SK-N-SH (cell line): ENCODE measurements at regions of chr7 and their contacts with region 1.

Region 1: DNA sequence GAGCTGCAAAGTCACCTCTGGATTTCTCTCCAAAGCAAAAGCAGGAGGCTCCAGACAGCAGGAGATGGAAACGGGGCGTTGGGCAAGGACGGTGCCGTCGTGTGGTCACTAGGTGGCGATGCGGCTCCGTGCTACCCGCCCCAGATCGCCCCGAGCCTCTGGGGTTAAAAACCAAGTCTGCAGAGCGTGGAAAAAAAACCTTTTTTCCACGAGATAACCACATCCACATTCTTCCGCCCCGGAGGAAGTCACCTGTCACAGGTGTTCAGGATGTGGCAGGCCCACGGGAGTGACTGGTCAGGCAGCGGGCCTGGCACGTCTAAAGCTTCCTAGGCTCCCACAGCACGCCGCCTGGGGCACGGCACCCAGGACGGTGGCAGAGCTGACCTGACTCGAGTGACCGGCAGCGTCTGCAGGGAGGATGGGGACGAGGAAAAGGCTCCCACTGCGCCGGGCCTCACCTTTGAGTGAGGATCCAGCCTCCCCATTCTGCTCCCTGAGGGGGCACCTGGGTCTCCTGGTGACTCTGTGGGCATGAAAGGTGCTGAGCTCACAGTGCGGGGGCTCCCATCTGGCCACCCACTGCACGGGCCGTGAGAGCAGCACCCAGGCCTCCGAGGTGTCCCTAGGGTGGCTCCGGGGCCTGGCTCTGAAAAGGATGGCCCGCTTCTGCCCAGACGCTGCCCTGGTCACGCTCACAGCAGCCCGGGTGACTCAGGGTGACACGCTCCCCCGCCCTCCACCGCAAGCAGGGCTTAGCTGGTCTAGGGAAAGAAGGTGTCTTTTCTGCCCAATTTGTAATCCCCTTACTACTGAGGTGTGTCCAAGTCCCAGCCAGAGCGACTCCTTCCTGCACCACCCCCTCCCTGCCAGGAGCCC is 71.3 kb upstream of the TNRC18 start:
- DNase-seq: peak; percentile 95
- H3K4me3 ChIP-seq: peak overlapping the region in 1 of 2 experiments; percentile 36; a peak in 1 of 4 replicates
- H3K27ac ChIP-seq: 0 out of 4 replicates have a peak overlapping the region, but pooled peaks of 1 of the 2 experiments have one; percentile 1
- H3K4me1 ChIP-seq: peaks cover 5 to 30% of the 10 kb centered on the region in 2 experiments; a peak in 3 of 4 replicates
- H3K27me3 ChIP-seq: no peaks in the 10 kb centered on the region
- CTCF ChIP-seq: peak; percentile 99
- EP300 ChIP-seq: no peak
- RAD21 ChIP-seq: peak; percentile 98

Region 2: GRCh38 chr7:5237286-5237685 is 257.6 kb before region 1 on chr7:
- CTCF ChIA-PET with region 1: interaction called, 11 read pairs
- POLR2A ChIA-PET with region 1: no interaction called
- DNase-seq: no peak
- H3K4me3 ChIP-seq: no peak overlapping the region
- H3K27ac ChIP-seq: no peak overlapping the region
- H3K4me1 ChIP-seq: peaks cover 0 to 12% of the 10 kb centered on the region in 2 experiments; a peak in 1 of 4 replicates
- H3K27me3 ChIP-seq: no peaks in the 10 kb centered on the region
- CTCF ChIP-seq: no peak
- EP300 ChIP-seq: no peak
- RAD21 ChIP-seq: no peak

Region 3: DNA sequence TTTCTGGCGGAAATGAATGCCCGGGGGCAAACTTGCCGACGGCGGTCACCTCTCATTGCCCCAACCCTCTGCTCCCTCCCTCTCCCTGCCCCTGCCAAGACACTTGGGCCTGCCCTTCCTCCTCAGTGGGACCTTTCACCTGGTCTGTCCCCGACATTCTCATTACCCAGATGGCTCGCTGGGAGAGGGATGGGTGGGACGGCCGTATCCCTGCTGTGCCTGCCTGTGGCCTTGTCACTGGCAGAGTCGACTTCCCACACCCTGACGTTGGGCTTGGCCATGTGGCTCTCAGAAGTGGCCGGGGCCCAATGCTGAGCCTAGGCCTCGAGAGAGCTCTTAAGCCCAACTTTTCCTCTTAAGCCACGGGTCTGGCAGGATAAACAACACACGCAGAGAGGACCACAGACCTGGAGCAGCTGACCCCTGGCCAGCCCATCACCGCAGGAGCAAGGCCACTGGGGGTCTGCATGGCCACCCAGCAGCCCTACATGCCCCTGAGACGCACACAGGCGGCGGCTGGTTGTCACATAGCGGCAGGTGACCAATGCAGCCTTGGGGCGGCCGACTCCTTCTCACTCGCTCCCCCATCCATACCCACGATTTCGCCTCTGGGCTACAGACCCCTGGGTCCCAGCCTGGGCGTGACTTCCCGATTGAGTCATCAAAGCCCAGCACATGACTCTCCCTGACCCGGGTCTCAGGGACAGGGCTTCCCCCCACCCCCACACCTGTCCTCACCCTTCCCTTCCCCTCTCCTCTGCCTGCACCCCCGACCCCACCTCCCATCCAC is 172.1 kb before region 1 on chr7:
- CTCF ChIA-PET with region 1: no interaction called
- POLR2A ChIA-PET with region 1: no interaction called
- DNase-seq: peak; percentile 27
- H3K4me3 ChIP-seq: no peak overlapping the region
- H3K27ac ChIP-seq: no peak overlapping the region
- H3K4me1 ChIP-seq: peaks cover 0 to 2% of the 10 kb centered on the region in 2 experiments; a peak in 1 of 4 replicates
- H3K27me3 ChIP-seq: no peaks in the 10 kb centered on the region
- CTCF ChIP-seq: no peak
- EP300 ChIP-seq: no peak
- RAD21 ChIP-seq: no peak

Region 4: DNA sequence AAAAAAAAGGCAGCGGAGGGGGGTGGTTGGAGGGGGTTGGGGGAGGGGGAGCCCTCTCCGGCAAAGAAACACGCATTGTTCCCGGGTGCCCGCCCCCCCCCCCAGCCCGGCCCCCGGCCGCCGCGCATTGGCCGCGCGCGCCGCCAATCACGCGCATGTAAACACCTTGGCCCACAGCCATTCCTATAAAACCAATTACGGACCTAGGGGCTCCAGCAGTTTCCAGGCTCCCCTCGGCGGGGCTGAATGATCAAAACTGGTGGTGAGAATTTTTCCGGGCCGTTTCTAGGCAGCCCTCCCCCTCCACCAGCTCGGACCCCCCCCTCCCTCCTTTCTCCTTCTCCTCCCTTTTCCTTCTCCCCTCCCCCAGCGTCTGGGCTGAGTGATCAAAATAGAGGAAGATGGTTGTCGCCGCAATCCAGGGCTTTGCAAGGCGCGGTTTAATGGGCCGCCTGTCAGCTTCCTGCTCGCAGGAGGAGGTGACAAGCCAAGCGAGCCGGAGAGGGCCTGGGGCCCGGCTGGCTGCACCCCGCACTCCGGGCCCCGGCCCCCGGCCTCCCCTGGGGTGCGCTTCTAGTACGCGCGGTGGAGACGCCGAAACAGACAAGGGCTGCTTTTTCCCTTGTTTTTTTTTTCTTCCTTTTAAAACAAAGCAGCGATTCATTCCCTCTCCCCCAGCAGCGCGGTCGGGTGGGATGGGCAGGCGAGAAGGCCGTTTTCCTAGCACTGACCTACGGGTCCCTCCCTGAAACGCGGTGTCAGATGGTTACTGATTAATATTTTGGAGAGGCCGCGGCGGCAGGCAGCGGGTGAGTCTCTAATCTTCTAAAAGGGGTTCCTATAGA is 70.9 kb before region 1 on chr7:
- CTCF ChIA-PET with region 1: interaction called, 10 read pairs
- POLR2A ChIA-PET with region 1: interaction called, 4 read pairs
- DNase-seq: peak; percentile 98
- H3K4me3 ChIP-seq: peak overlapping the region; percentile 99 to 100
- H3K27ac ChIP-seq: peak overlapping the region; percentile 97 to 99
- H3K4me1 ChIP-seq: peaks cover 6 to 20% of the 10 kb centered on the region in 2 experiments; a peak in 3 of 4 replicates
- H3K27me3 ChIP-seq: no peaks in the 10 kb centered on the region
- CTCF ChIP-seq: no peak
- EP300 ChIP-seq: peak; percentile 62 to 63; a peak in 3 of 4 replicates
- RAD21 ChIP-seq: no peak; the same call in 1 of the 2 replicates

Region 5: GRCh38 chr7:5484921-5485320 is 10.0 kb before region 1 on chr7:
- CTCF ChIA-PET with region 1: interaction called, 35 read pairs
- POLR2A ChIA-PET with region 1: no interaction called
- DNase-seq: peak; percentile 32
- H3K4me3 ChIP-seq: no peak overlapping the region
- H3K27ac ChIP-seq: no peak overlapping the region
- H3K4me1 ChIP-seq: peaks cover 3 to 5% of the 10 kb centered on the region in 2 experiments; a peak in 2 of 4 replicates
- H3K27me3 ChIP-seq: no peaks in the 10 kb centered on the region
- CTCF ChIP-seq: no peak
- EP300 ChIP-seq: no peak
- RAD21 ChIP-seq: no peak

Region 6: DNA sequence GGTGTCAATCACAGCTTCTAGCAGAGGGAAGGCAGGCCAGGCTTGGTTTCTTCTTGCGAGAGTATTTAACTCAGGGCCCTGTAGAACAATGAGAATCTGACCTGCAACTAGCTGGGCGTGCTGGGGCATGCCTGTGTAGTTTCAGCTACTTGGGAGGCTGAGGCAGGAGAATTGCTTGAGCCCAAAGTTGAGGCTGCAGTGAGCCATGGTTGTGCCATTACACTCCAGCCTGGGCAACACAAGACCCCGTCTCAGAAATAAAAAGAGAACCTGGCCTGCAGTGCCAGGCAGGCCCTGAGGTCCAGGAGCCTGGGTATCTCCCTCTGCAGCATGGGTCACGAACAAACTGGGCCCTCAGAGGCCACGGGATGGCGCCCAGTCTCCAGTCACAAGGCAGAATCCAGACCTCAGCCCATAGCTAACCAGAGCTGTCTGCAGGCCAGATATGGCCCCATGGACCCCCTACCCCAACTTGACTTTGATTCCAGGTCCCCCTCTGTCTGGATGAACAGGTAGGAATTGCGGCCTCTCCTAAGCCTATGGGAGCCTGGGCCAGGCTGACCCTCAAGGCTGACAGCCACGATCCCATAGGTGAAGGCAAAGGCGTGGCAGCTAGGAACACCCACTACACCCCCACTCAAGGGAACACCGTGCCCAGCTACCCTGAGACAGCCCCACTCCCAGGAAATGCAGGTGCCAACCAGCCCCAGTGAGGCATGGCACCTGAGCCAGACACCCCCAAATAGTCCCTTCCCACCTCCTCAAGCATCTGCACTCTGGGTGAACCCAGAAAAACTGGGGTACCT is 31.4 kb after region 1 on chr7:
- CTCF ChIA-PET with region 1: interaction called, 17 read pairs
- POLR2A ChIA-PET with region 1: no interaction called
- DNase-seq: peak; percentile 31
- H3K4me3 ChIP-seq: 0 out of 4 replicates have a peak overlapping the region, but pooled peaks of 1 of the 2 experiments have one; percentile 85
- H3K27ac ChIP-seq: peak overlapping the region; percentile 56 to 95
- H3K4me1 ChIP-seq: peaks cover 13 to 26% of the 10 kb centered on the region in 2 experiments; a peak in 3 of 4 replicates
- H3K27me3 ChIP-seq: no peaks in the 10 kb centered on the region
- CTCF ChIP-seq: no peak
- EP300 ChIP-seq: no peak
- RAD21 ChIP-seq: peak; percentile 21; the same call in 1 of the 2 replicates

Region 7: DNA sequence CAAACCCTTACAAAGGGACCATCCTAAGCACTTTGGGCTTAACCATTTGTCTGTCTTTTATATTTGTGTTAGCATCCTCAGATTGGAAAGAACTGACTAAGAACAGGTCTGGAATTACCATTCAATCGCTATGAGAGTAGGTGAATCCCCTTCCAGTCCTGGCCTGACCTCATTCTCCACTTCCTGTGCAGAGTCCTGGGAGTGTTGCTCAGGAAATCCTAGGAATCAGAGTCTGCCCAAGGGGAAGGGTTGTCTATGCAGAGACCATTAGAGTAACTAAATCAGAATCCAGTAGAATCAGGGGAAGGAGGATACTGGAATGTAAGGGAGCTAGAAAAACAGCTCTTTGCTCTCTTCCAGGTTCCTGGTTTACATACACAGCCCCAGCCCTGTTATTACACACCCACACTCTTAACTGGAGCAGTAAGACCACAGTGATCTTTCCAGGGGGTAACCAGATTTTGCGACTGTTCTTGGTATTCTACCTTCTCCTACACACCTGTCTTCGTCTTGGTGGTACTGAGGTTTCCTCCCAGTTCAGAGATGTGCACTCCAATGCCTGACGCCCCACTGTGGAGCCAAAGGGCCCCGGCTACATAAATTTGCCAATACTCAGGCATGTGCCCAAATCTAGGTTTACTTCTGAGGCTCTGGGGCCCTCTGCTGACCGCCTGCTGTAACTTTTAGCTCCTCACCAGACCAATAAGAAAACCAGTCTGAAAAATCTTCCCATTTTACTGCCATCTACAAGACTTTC is 182.8 kb after region 1 on chr7:
- CTCF ChIA-PET with region 1: interaction called, 110 read pairs
- POLR2A ChIA-PET with region 1: no interaction called
- DNase-seq: peak; percentile 80
- H3K4me3 ChIP-seq: peak overlapping the region in 1 of 2 experiments; percentile 8; a peak in 2 of 4 replicates
- H3K27ac ChIP-seq: peak overlapping the region; percentile 13 to 45; a peak in 3 of 4 replicates
- H3K4me1 ChIP-seq: peaks cover 16 to 23% of the 10 kb centered on the region in 2 experiments
- H3K27me3 ChIP-seq: no peaks in the 10 kb centered on the region
- CTCF ChIP-seq: peak; percentile 97
- EP300 ChIP-seq: no peak
- RAD21 ChIP-seq: peak; percentile 94

Region 8: DNA sequence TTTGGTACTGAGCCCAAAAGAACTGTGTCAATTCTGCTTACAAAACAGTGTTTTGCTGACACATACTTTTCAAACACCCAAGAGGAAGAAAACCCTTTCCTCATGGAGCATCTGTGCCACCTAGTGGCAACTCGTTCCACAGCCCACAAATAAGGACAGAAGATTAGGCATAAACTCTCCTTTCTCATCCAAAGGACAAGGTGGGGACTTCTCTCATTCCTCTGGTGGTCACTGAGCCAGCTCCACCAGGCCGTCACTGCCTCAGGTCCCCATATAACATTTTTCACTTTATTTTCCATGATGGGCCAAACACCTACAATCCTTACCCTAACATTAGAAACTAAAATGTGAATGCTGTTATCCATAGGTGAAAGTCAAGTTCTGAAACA is 209.6 kb after region 1 on chr7:
- CTCF ChIA-PET with region 1: interaction called, 84 read pairs
- POLR2A ChIA-PET with region 1: no interaction called
- DNase-seq: peak; percentile 75
- H3K4me3 ChIP-seq: no peak overlapping the region
- H3K27ac ChIP-seq: peak overlapping the region; percentile 6 to 7; a peak in 3 of 4 replicates
- H3K4me1 ChIP-seq: peaks cover 9 to 13% of the 10 kb centered on the region in 2 experiments; a peak in 3 of 4 replicates
- H3K27me3 ChIP-seq: no peaks in the 10 kb centered on the region
- CTCF ChIP-seq: peak; percentile 99
- EP300 ChIP-seq: no peak
- RAD21 ChIP-seq: peak; percentile 98